ENCODE measurements at regions of chr14 and their contacts with region 1.

Region 1: DNA sequence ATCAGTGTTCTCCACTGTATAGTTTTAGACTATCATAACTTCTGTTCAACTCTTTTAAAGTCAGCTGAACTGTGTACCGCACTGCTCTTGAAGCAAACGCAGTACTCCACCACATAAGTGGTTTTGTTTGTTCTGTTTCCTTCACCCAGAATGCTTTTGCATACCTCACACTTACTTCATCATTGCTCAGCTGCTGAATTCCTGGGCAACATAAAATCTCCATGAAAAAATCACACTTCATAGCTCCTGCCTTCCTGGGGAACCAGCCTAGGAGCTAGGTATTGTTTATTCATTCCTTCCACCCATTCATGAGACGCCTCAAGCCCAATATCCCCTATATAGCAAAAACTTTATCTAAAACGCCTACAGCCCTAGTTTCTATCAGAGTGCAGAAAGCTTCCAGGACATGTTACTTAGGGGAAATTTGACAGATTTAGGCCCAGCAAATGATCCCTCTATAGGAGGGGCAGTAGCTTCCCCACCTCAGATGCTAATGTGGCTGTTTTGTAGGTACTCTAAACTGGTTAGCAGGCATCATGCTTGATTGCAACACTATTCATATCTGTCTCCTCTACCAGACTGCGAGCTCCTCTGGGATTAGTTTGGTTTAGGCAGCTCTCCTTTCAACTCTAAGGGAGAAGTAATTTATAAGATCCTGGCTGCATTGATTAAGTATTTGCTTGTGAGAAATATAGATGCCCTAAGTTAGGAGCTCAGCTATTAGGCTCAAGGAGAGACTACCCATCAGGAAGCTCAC is 44.5 kb downstream of the LRRC9 start:
- DNase-seq: no peak
- H3K4me3 ChIP-seq: no peak overlapping the region
- CTCF ChIP-seq: no peak

Region 2: GRCh38 chr14:59986556-59987059 is 22.2 kb after region 1 on chr14:
- CTCF ChIA-PET with region 1: interaction called, 25 read pairs
- POLR2A ChIA-PET with region 1: no interaction called
- DNase-seq: no peak
- H3K4me3 ChIP-seq: no peak overlapping the region
- CTCF ChIP-seq: no peak

Region 3: DNA sequence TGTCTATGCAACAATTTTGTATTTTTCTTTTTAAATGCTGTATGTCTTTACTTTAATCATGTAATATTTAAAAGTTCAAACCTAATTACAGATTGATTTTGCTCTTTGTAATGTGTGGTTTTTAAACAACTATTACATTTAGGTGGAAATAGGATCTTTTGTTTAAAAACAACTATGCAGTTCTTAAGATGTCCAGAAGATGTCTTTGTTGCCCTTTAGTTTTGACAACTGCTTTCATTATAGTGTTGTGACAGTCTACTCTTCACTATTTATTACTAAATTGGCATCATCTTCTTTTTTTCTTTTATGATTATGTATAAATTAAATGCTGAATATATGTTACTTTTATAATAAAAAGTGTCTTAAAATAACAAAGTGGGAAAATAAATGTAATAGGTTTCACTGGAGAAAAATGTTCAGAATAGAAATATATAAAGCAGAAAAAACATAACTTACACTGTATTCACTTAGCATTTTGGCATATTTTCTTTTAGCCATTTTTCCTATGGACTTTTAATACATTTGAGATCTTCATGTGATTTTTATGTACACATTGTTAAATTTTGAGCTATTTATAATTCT is 100.2 kb after region 1 on chr14:
- CTCF ChIA-PET with region 1: interaction called, 15 read pairs
- POLR2A ChIA-PET with region 1: no interaction called
- DNase-seq: no peak
- H3K4me3 ChIP-seq: no peak overlapping the region
- CTCF ChIP-seq: peak; percentile 30

Measured in AG04449 (cell line).